ENCODE measurements at regions of chr5 and their contacts with region 1.

Region 1: GRCh38 chr5:172697123-172698121 is 56.4 kb downstream of the NEURL1B start:
- DNase-seq: peak; percentile 85 to 91
- ATAC-seq: peak; percentile 82 to 86 (median 84)
- H3K4me3 ChIP-seq: peak overlapping the region; percentile 68
- H3K27ac ChIP-seq: peak overlapping the region; percentile 61
- H3K4me1 ChIP-seq: peaks cover 9% of the 10 kb centered on the region
- H3K27me3 ChIP-seq: no peaks in the 10 kb centered on the region
- CTCF ChIP-seq: peak; percentile 91

Region 2: DNA sequence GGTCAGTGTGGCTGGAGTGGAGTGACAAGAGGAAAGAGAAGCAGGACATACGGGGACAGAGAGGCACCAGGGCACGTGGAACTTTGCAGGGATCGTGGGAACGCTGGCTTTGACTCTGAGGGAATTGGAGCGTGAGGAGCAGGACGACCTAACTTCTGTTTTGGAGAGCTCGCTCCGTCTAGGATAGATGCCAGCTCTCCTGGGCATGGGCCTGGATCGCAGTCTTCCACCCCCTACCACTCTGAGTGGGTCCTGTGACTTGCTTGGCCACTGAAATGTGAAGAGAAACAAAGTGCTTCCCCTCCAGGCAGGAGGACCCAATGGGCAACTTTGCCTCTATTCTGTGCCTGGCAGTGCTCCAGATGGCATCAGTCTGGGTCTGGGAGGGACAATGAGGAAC is 234.4 kb before region 1 on chr5:
- intact Hi-C with region 1: loop called (anchors 1 to 5 kb)
- DNase-seq: no peak
- ATAC-seq: no peak
- H3K4me3 ChIP-seq: no peak overlapping the region
- H3K27ac ChIP-seq: no peak overlapping the region
- H3K4me1 ChIP-seq: no peaks in the 10 kb centered on the region
- H3K27me3 ChIP-seq: peaks cover 0 to 7% (median 2%) of the 10 kb centered on the region in 3 donors
- CTCF ChIP-seq: no peak

Region 3: GRCh38 chr5:172479044-172479783 is 218.2 kb before region 1 on chr5:
- intact Hi-C with region 1: loop called (anchors 1 to 2 kb)
- DNase-seq: peak; percentile 85 to 89
- ATAC-seq: peak; percentile 93 to 98 (median 96)
- H3K4me3 ChIP-seq: peak overlapping the region; percentile 22
- H3K27ac ChIP-seq: peak overlapping the region; percentile 46
- H3K4me1 ChIP-seq: no peaks in the 10 kb centered on the region
- H3K27me3 ChIP-seq: no peaks in the 10 kb centered on the region
- CTCF ChIP-seq: peak; percentile 73

Region 4: DNA sequence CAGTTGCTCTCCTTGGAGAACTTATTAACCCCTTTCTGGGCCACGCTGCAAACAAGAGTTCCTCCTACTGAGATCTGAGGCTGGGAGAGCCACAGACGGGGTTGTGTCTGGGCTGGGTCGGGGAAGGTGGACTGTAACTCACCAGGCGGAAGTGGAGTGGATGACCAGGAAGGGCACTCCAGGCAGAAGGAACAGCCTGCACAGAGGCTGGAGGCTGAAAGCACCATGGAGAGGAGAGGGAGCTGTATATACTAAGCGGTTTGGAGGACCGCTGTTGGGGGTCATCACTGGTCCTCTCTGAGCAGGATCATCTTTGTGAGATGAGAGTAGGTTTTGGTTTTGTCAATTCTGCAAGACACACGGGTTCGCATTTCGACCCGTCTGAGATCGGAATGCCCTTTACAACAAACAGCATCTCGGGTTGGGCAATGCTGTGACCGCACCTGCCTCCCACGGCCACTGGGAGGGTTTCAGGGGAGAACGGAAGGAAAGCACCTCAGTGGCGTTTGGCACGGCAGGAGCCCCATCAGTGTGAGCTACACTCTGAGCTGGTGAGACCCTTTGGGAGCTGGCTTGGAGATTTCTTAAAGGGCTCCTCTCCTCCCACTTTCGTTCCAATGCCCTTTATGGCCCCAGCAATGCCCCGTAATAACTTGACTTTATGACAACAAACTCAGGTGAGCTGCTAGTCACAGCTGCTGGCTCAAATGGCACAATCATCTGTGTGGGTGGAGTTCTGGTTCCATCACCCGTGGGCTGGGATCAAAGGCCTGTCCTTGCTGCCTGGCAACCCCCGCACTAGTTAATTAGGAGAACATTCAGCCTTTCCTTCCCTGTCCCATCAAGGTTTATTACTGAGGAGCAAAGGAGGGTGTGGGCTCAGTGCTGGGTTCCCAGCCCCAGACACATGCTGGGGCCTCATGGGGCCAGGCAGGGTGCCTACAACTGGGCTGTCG is 75.1 kb before region 1 on chr5:
- intact Hi-C with region 1: no loop called
- DNase-seq: no peak
- ATAC-seq: no peak
- H3K4me3 ChIP-seq: no peak overlapping the region
- H3K27ac ChIP-seq: no peak overlapping the region
- H3K4me1 ChIP-seq: no peaks in the 10 kb centered on the region
- H3K27me3 ChIP-seq: no peaks in the 10 kb centered on the region
- CTCF ChIP-seq: no peak

Region 5: GRCh38 chr5:172640822-172641358 is 56.5 kb before region 1 on chr5 and contains the start of gene NEURL1B:
- intact Hi-C with region 1: loop called in 1 of 2 experiments (anchors 5 kb)
- DNase-seq: peak; percentile 77 to 86
- ATAC-seq: peak; percentile 72 to 85 (median 80)
- H3K4me3 ChIP-seq: peak within 1 kb of the TSS; percentile 81
- H3K27ac ChIP-seq: peak within 1 kb of the TSS; percentile 78
- H3K4me1 ChIP-seq: peaks cover 20% of the 10 kb centered on the region
- H3K27me3 ChIP-seq: peaks cover 0 to 53% (median 3%) of the 10 kb centered on the region in 3 donors
- CTCF ChIP-seq: peak; percentile 14
- total RNA-seq, gene NEURL1B: 13.7 to 20.4 (median 16.4) TPM

Region 6: DNA sequence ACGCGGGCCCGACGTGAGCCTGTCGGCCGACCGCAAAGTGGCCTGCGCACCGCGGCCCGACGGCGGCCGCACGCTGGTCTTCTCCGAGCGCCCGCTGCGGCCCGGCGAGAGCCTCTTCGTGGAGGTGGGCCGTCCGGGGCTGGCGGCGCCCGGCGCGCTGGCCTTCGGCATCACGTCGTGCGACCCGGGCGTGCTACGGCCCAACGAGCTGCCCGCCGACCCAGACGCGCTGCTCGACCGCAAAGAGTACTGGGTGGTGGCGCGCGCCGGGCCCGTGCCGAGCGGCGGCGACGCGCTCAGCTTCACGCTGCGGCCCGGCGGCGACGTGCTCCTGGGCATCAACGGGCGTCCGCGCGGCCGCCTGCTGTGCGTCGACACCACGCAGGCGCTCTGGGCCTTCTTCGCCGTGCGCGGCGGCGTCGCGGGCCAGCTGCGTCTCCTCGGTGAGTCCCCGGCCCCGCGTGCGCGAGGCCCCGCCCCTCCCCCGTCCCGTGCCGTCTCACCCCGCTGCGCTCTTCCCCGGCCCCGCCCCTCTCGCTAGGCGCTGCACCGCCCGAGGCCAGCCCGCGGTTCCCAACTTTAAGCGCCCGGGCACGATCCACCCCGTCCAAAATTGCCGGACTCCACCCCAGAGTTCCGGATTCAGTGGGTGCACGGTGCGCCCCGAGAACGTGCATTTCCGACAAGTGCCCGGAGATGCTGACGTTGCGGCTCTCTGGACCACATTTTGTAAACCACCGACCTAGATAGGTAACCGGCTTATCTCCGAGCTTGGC is 13.5 kb before region 1 on chr5:
- intact Hi-C with region 1: no loop called
- DNase-seq: peak in 1 of 2 donors; percentile 40
- ATAC-seq: no peak
- H3K4me3 ChIP-seq: no peak overlapping the region
- H3K27ac ChIP-seq: no peak overlapping the region
- H3K4me1 ChIP-seq: peaks cover 17% of the 10 kb centered on the region
- H3K27me3 ChIP-seq: peaks cover 0 to 5% (median 0%) of the 10 kb centered on the region in 3 donors
- CTCF ChIP-seq: no peak